Right cardiac atrium (tissue), 5 donors: ENCODE measurements at regions of chr4 and their contacts with region 1.

Region 1: DNA sequence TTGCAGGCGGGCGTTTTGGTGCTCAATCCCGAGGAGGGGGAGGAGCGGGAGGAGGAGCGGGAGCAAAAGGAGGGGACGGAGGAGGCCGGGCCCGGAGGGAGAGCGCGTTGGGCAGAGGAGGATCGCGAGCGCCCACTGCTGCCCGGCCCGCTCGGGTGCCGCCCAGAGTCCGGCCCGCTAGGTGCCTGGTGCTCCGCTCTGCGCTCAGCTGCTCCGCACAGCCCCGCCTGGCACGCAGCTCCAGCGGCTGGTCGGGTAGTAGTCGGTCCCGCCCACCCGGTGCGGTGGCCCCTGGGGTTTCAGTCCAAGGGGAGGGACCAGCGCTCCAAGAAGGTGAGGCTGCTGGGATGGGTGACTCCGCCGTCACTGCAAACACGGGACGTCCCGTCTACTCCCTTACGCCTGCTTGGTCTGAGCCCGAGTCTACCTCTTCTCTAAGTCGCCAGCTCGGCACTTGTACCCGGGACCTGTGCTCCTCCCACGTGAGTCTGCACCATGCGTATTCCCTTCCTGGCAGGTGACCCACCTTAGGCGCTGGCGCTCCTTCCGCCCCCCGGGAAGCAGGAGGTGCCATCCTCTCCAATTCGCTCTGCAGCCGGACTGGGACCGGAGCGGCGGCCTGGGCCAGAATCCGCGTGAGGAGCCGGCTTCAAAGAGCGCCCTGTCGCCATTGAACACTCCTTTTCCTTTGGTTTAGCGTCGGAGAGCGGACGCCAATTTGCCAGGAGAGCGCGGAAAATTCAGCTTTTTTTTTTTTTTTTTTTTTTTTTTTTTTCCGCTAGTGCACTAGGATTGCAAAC is 405 bp upstream of the HS3ST1 start:
- DNase-seq: peak; percentile 82 to 95 (median 93)
- ATAC-seq: peak; percentile 97 to 98
- H3K4me3 ChIP-seq: peak overlapping the region; percentile 46
- H3K27ac ChIP-seq: no peak overlapping the region
- H3K4me1 ChIP-seq: peaks cover 3% of the 10 kb centered on the region
- H3K27me3 ChIP-seq: no peaks in the 10 kb centered on the region

Region 2: DNA sequence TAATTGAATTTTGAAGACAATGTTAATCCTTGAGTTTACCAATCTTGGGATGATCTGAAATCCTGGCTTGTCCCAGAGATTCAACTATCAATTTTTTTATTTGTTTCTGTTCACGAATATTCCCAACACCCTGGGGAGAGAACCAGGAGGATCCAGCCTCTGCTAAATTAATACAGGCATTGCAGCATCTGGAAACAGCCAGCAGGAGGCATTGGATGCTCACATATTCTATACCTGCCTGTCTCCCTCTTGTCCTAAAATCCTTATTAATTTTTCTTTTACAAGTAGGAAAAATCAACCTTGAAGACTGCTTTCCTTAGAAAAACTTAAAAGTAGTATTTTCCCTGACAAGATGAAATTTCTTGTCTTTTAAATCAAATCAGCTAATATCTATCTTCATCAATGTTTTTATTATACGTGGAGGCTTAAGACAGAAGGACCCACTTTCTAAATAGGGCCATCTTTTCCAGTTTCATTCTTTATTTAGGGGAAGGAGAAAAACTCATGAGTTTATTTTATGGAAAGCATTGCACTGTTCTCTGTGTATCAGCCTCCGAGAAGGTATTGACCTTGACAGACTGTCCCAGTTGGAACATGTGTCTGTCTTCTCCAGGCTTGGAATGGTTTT is 846.9 kb before region 1 on chr4:
- intact Hi-C with region 1: loop called in 2 of 4 experiments (anchors 5 to 10 kb)
- DNase-seq: peak in 2 of 3 donors; percentile 29 to 61
- ATAC-seq: peak; percentile 64 to 72
- H3K4me3 ChIP-seq: no peak overlapping the region
- H3K27ac ChIP-seq: no peak overlapping the region
- H3K4me1 ChIP-seq: no peaks in the 10 kb centered on the region
- H3K27me3 ChIP-seq: no peaks in the 10 kb centered on the region

Region 3: DNA sequence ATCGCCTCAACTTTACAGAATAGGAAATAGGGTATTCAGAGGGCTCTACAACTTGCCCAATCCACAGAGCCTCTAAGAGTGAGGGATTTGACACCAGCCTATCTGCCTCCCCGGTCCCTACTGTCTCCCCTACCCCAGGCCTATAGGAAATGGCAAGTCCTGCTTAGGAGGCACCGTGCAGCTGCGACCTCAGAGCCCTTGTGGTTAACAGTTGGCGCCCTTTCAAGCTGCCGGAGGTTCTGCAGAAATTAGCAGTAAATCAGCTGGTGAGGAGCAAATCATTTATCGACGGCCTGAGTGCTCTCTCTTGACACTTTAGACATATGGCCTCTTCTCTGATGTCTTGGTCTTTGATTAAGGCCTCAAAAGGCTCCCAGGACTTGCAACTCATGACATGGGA is 841.4 kb before region 1 on chr4:
- intact Hi-C with region 1: loop called in 2 of 4 experiments (anchors 5 to 10 kb)
- DNase-seq: peak in 1 of 3 donors; percentile 49
- ATAC-seq: no peak
- H3K4me3 ChIP-seq: no peak overlapping the region
- H3K27ac ChIP-seq: no peak overlapping the region
- H3K4me1 ChIP-seq: no peaks in the 10 kb centered on the region
- H3K27me3 ChIP-seq: no peaks in the 10 kb centered on the region

Region 4: DNA sequence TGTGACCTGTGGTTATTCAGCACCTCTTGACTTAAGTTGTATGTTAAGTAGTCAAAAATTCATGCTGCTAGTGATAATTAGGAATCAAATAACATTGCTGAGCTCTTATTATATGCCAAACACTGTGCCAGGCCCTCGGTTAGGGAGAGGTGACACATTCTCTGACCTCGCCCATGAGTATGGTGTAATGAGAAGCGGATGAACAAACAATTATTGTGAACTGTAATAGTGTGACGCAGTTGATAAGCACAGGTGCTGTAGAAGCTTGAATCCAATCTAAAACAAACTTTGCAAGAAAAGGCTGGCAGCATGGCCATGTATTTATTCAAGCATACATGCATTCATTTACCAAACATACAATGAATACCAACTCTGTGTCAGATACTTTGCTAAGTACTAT is 303.1 kb after region 1 on chr4:
- intact Hi-C with region 1: loop called in 1 of 4 experiments (anchors 10 kb)
- DNase-seq: no peak
- ATAC-seq: no peak
- H3K4me3 ChIP-seq: no peak overlapping the region
- H3K27ac ChIP-seq: no peak overlapping the region
- H3K4me1 ChIP-seq: no peaks in the 10 kb centered on the region
- H3K27me3 ChIP-seq: no peaks in the 10 kb centered on the region